Activated naive CD4-positive, alpha-beta T cell treated with anti-CD3 and anti-CD28 coated beads for 36 hours (primary cell): ENCODE measurements at regions of chr3 and their contacts with region 1.

Region 1: DNA sequence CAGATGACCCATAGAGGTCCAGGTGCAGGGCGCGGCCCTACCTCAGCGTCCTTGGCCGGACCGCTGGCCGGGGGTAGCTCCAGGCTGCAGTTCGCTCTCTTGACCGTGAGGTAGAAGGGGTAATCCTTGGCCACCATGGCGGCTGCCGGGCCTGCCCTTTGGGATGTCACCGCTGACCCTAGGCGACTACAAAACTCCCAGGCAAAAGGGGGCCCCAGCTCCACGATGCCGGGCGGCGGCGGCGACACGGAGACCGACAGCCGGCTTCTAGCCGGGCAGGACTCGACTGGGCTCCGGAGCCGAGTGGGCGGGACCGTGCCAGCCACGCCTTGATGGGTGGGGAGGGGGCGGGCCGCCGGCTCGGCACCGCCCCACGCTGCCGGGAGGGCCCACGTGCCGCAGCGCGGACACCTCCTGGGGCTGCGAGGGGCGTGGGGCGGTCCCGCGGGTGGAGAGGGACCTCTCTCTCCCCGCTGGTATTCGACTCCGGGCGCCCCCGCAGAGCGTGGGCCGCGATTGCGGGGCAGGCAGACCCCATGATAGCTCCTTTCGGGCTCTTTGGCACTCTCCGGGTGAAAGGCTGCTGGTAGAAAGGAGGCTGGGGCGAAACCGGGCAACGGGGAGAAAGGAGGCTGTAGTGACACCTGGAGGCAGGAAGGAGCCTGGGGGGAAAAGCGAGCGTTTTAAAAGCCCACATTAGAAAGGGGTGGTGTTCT is at the start of gene ARHGEF3:
- DNase-seq: peak; percentile 89
- H3K4me3 Mint-ChIP-seq: peak within 1 kb of the TSS; percentile 95
- H3K27ac Mint-ChIP-seq: peak within 1 kb of the TSS; percentile 89
- H3K4me1 Mint-ChIP-seq: peaks cover 38% of the 10 kb centered on the region
- H3K27me3 Mint-ChIP-seq: no peaks in the 10 kb centered on the region
- total RNA-seq, gene ARHGEF3: 36.4 to 37.7 TPM

Region 2: DNA sequence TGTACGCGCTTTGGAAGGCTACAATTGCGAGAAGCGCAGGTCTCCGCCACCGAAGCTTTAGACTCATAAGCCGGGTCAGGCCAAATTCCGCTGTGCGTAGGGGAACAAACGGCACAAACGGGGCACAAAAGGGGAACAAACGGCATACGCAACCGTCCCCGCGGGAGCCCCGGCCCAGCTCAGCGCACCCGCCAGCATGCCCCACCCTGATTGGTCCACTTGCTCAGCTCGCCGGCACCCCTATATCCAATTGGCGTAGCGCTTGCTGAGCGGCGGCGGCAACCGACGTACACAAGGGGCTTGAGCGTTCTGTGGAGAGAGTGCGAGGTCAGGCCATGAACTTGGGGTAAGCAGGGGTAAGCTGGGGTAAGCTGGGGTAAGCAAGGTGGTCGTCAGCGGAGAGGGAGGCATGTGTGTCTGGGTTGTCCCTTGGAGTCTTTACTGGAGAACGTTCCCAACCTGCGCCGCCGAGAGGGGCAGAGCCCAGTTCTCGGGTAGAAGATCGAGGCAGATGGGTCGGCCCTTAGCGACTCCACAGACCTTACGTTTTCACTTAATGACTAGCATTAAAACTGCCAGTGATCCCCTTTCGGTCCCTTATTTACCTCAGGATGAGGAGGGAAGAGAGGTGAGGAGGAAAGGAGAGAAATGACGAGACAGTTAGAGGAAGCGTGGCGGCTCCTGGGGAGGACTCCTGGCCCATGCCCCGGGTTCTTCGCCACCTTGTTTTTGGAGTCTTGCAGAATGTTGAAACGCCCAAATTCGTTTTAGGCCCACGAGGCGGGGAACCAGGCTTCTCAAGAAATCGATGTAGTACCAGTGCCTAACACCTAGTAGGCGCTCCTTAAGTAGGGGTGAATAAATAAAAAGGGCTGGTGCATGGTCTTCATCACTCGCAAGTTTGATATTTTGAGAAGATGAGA is 244.7 kb before region 1 on chr3 and contains the start of gene CCDC66:
- CTCF ChIA-PET with region 1: interaction called, 3 read pairs
- intact Hi-C with region 1: loop called (anchors 1 kb)
- DNase-seq: peak; percentile 97
- H3K4me3 Mint-ChIP-seq: peak within 1 kb of the TSS; percentile 94
- H3K27ac Mint-ChIP-seq: peak within 1 kb of the TSS; percentile 97
- H3K4me1 Mint-ChIP-seq: peaks cover 26% of the 10 kb centered on the region
- H3K27me3 Mint-ChIP-seq: no peaks in the 10 kb centered on the region
- total RNA-seq, gene CCDC66: 29.0 to 29.3 TPM

Region 3: GRCh38 chr3:56673781-56674457 is 127.9 kb before region 1 on chr3:
- CTCF ChIA-PET with region 1: no interaction called
- intact Hi-C with region 1: no loop called
- DNase-seq: no peak
- H3K4me3 Mint-ChIP-seq: no peak overlapping the region
- H3K27ac Mint-ChIP-seq: no peak overlapping the region
- H3K4me1 Mint-ChIP-seq: peaks cover 27% of the 10 kb centered on the region
- H3K27me3 Mint-ChIP-seq: no peaks in the 10 kb centered on the region

Region 4: DNA sequence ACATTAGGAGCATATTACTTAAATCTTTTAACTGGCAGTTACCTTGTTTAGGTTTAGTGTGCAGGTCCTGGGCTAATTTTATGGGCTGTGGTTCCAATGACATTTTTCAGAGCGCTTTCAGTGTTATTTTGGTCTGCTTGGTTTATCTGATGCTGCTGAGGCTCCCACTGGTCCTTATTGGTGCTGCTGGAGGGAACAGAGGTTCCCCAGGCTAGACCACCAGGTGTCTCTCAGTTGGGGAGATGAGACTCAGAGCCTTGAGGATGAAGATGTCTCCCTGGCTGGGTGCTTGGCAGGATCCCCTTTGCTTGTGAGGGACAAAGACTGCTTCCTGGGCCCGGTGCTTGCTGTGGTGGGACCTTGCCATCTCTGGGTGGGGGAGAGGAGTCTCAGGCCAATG is 90.5 kb before region 1 on chr3:
- CTCF ChIA-PET with region 1: interaction called, 204 read pairs
- intact Hi-C with region 1: loop called (anchors 1 kb)
- DNase-seq: no peak
- H3K4me3 Mint-ChIP-seq: no peak overlapping the region
- H3K27ac Mint-ChIP-seq: no peak overlapping the region
- H3K4me1 Mint-ChIP-seq: no peaks in the 10 kb centered on the region
- H3K27me3 Mint-ChIP-seq: no peaks in the 10 kb centered on the region

Region 5: GRCh38 chr3:56783644-56784447 is 18.0 kb before region 1 on chr3:
- CTCF ChIA-PET with region 1: interaction called, 83 read pairs
- intact Hi-C with region 1: loop called (anchors 2 kb)
- DNase-seq: peak; percentile 88
- H3K4me3 Mint-ChIP-seq: peak overlapping the region; percentile 70
- H3K27ac Mint-ChIP-seq: peak overlapping the region; percentile 98
- H3K4me1 Mint-ChIP-seq: peaks cover 95% of the 10 kb centered on the region
- H3K27me3 Mint-ChIP-seq: no peaks in the 10 kb centered on the region

Region 6: DNA sequence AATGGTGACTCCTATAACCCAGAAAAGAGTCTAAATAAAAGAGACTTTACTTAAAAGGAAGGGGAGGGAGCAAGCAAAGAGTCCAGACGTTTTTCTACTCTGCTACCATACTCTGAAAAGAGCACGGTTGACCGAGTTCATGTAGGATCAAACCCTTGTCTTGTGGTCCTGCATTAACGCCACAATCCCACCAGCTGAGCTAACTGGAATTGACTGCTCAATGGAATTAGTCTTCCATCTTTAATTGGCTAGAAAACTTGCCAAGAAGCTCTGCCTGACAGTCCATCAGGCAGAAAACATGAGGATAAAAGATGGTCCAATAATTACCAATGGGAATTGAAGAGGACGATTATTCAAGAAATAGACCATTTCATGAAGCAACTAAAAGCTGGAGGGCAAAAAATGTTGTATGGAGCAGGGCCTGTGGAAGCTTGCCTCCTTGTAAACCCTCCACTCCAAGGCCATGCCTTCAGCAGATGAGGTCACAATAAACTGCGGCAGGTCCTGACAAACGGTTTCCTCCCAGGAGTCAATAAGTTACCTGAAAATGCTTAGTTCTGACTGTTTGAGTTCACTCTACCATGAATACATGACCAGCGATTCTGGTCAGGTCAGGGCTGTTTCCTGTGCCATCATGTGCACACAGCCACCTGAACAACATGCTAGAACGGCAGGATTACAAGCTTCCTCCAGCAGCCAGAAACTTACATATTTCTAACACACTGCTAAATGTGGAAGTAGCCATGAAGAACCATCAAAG is 35.6 kb after region 1 on chr3:
- CTCF ChIA-PET with region 1: interaction called, 17 read pairs
- intact Hi-C with region 1: no loop called
- DNase-seq: peak; percentile 51
- H3K4me3 Mint-ChIP-seq: no peak overlapping the region
- H3K27ac Mint-ChIP-seq: no peak overlapping the region
- H3K4me1 Mint-ChIP-seq: peaks cover 49% of the 10 kb centered on the region
- H3K27me3 Mint-ChIP-seq: no peaks in the 10 kb centered on the region

Region 7: DNA sequence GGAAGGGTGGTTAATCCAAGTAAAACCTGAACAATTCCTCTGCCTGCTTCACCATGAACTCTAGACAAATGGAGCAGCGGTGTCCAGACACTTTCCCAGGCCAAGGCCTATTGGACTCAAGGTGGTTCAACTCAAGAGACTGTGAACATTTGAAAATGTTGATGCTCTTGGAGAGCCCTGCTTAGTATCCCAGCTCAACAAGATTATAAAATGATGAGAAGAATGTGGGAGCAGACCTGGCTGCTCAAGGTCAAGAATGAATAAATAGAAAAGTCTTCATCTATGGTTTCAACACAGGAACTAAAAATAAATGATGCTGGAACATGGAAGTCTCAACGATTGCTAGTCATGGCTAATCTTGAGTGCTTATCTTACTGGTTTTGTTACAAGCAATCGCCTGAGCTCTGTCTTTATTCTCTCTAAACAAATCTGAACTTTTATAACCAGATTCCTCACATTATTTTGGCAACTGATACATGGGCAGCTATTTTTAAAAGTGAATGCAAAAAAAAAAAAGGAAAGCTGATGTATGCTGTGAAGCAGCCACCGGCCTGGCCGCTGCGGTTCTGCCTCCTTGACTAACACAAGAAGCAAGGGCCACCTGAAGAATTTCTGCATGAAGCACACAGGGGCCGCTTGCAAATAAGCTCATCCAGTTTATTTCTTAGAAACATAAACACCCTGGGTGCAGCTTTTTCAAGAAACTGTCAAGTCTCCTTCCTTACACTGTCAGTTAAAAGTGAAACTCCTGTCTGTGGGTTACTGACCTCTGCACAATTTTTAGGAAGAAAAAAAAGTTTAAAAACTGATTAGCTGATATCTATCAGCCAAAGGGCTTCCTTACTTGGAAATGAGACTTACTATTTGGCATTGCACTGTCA is 120.0 kb after region 1 on chr3:
- CTCF ChIA-PET with region 1: interaction called, 43 read pairs
- intact Hi-C with region 1: loop called (anchors 1 kb)
- DNase-seq: peak; percentile 21
- H3K4me3 Mint-ChIP-seq: peak overlapping the region; percentile 72
- H3K27ac Mint-ChIP-seq: peak overlapping the region; percentile 62
- H3K4me1 Mint-ChIP-seq: peaks cover 83% of the 10 kb centered on the region
- H3K27me3 Mint-ChIP-seq: no peaks in the 10 kb centered on the region